MCF 10A (cell line): ENCODE measurements at regions of chrX and their contacts with region 1.

Region 1: GRCh38 chrX:47233337-47234113 is 716 bp downstream of the USP11 start:
- DNase-seq: peak; percentile 94
- H3K4me3 Mint-ChIP-seq: peak overlapping the region; percentile 95
- H3K27ac Mint-ChIP-seq: peak overlapping the region; percentile 100
- H3K4me1 Mint-ChIP-seq: peaks cover 6% of the 10 kb centered on the region
- H3K27me3 Mint-ChIP-seq: peaks cover 53% of the 10 kb centered on the region
- CTCF ChIP-seq: no peak

Region 2: GRCh38 chrX:47217642-47218279 is 15.8 kb before region 1 on chrX:
- CTCF ChIA-PET with region 1: interaction called, 5 read pairs
- POLR2A ChIA-PET with region 1: interaction called, 79 read pairs
- intact Hi-C with region 1: no loop called
- DNase-seq: peak; percentile 100
- H3K4me3 Mint-ChIP-seq: peak overlapping the region; percentile 82
- H3K27ac Mint-ChIP-seq: peak overlapping the region; percentile 99
- H3K4me1 Mint-ChIP-seq: peaks cover 41% of the 10 kb centered on the region
- H3K27me3 Mint-ChIP-seq: no peaks in the 10 kb centered on the region
- CTCF ChIP-seq: no peak